Mammary epithelial cell (primary cell): ENCODE measurements at regions of chr1 and their contacts with region 1.

Region 1: DNA sequence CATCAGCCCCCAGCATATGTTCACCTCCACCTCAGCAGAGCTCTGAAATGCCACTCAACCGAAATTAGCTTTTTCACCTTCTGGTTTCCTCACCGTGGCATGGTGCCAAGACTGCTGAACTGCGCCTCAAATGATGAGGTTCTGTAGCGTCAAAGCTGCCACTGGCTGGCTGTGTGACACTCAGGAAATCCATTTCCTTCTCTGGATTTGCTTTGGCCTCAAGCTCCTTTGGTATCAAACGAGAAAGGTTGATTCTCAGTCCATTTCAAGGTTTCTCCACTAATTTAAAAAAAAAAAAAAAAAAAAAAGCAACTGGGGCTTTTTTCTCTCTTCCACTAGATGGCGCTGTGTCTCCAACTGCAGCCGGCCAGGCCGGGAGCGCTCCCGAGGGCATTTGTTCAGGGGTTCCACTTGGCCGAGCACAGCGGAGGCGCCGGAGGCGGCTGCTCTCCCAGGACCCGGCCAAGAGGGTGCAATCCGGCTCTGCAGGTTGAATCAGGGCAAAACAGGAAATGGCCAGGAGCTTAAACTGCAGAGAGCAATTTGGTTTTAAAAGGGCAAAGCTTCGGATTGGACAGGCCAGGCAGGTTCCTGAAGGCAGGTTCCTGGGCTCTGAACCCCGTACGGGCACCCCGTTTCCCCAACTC is 26.5 kb upstream of the PLA2G2C start:
- DNase-seq: peak; percentile 80
- H3K4me3 ChIP-seq: no peak overlapping the region
- H3K27ac ChIP-seq: peak overlapping the region; percentile 97
- H3K4me1 ChIP-seq: peaks cover 41% of the 10 kb centered on the region
- H3K27me3 ChIP-seq: no peaks in the 10 kb centered on the region
- CTCF ChIP-seq: peak; percentile 58 to 84

Region 2: DNA sequence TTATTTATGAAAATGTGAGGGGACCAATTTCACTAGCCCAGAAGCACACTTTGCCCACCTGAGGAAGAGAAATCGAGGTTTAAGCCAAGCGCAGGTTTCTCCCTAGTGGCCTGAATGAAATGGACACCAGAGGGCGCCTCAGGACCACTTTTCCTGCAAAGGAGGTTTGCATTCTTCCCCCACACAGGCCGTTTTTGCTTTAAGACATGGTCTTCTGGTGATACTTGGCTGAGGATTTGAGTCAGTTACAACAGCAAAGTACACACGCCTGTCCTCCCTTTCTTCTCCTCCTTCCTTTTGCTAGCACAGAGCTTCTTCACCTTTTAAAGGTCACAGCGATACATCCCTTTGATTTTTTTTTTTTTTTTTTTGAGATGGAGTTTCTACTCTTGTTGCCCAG is 294.8 kb before region 1 on chr1:
- CTCF ChIA-PET with region 1: no interaction called
- dilution Hi-C with region 1: no loop called
- in situ Hi-C with region 1: no loop called
- intact Hi-C with region 1: loop called (anchors 5 kb)
- DNase-seq: peak; percentile 60
- H3K4me3 ChIP-seq: no peak overlapping the region
- H3K27ac ChIP-seq: no peak overlapping the region
- H3K4me1 ChIP-seq: no peaks in the 10 kb centered on the region
- H3K27me3 ChIP-seq: no peaks in the 10 kb centered on the region
- CTCF ChIP-seq: peak; percentile 90 to 95

Region 3: DNA sequence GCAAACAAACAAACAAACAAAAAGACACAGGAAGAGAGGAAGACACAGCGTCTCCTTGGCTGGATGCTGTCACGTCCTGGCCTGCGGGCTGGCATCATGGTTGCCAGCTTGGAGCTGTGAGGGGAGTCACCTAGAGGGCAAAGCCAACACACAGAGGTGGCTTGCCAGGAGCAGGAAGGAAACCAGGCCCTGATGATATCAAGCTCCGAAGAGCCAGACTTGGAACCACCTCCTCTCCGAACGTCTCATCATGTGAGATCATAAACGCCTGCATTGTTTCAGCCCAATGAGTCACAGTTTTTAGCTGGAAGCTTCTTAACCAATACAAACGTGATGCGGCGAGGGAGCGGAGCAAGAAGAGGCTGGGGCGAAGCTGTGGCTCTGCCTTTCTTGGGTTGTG is 102.1 kb before region 1 on chr1:
- CTCF ChIA-PET with region 1: no interaction called
- dilution Hi-C with region 1: no loop called
- in situ Hi-C with region 1: no loop called
- intact Hi-C with region 1: no loop called
- DNase-seq: peak; percentile 98
- H3K4me3 ChIP-seq: no peak overlapping the region
- H3K27ac ChIP-seq: peak overlapping the region; percentile 75
- H3K4me1 ChIP-seq: peaks cover 22% of the 10 kb centered on the region
- H3K27me3 ChIP-seq: no peaks in the 10 kb centered on the region
- CTCF ChIP-seq: no peak

Region 4: GRCh38 chr1:20165522-20165951 is 47.3 kb before region 1 on chr1:
- CTCF ChIA-PET with region 1: no interaction called
- dilution Hi-C with region 1: loop called (anchors 5 kb)
- in situ Hi-C with region 1: no loop called
- intact Hi-C with region 1: loop called (anchors 1 kb)
- DNase-seq: peak; percentile 52
- H3K4me3 ChIP-seq: no peak overlapping the region
- H3K27ac ChIP-seq: no peak overlapping the region
- H3K4me1 ChIP-seq: peaks cover 29% of the 10 kb centered on the region
- H3K27me3 ChIP-seq: no peaks in the 10 kb centered on the region
- CTCF ChIP-seq: peak; percentile 55 to 64

Region 5: GRCh38 chr1:20361806-20362640 is 149.2 kb after region 1 on chr1:
- CTCF ChIA-PET with region 1: interaction called, 34 read pairs
- dilution Hi-C with region 1: no loop called
- in situ Hi-C with region 1: no loop called
- intact Hi-C with region 1: loop called (anchors 2 kb)
- DNase-seq: peak; percentile 55
- H3K4me3 ChIP-seq: no peak overlapping the region
- H3K27ac ChIP-seq: no peak overlapping the region
- H3K4me1 ChIP-seq: peaks cover 41% of the 10 kb centered on the region
- H3K27me3 ChIP-seq: peaks cover 5% of the 10 kb centered on the region
- CTCF ChIP-seq: peak; percentile 95 to 98

Region 6: DNA sequence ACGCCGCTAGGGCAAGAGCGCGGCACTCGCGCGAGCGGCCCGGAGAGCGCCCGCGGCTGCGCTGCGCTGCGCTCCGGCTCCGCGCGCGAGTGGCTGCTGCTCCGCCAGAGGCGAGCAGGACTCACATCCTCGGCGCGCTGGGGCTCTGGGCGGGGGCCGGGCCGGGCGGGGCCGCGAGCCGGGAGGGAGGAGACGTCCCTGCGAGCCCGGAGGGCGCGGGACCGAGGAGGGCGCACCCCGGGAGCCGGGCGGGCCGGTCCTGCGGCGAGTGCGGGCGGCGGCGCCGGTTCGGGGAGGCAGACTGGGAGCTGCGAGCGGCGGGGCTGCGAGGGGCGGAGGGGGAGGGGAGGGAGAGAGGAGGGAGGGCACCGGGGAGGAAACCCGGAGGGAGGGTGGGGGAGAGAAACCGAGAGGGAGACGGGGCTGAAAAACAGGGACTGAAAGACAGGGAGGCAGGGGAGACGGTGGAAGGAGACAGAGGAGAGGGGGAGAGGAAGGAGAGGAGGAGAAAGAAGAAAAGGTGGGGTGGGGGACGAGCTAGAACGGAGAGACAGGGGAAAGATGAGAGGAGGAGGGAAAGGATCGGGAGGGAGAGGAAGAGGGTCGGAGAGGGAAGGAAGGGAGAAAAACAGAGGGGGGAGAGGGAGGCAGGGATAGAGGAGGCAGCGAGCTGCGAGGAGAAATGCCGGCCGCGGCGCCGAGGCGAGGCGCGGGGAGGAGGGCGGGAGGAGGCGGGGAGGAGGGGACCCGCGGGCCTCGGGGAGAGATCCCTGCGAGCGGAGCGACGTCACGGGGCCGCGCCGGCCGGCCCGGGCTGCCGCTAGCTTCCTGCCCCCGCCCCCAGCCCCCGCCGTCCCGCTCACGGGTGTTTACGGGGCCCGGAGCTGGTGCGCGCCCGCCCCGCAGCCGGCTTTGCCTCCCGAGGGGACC is 273.0 kb after region 1 on chr1 and contains the start of gene CAMK2N1:
- CTCF ChIA-PET with region 1: no interaction called
- dilution Hi-C with region 1: loop called (anchors 5 kb)
- in situ Hi-C with region 1: loop called (anchors 5 kb)
- intact Hi-C with region 1: no loop called
- DNase-seq: peak; percentile 79
- H3K4me3 ChIP-seq: peak within 1 kb of the TSS; percentile 73 to 98 (median 94)
- H3K27ac ChIP-seq: peak within 1 kb of the TSS; percentile 79
- H3K4me1 ChIP-seq: peaks cover 28% of the 10 kb centered on the region
- H3K27me3 ChIP-seq: no peaks in the 10 kb centered on the region
- CTCF ChIP-seq: no peak
- total RNA-seq, gene CAMK2N1: 22.0 to 105 TPM

Region 7: GRCh38 chr1:20640183-20640597 is 427.4 kb after region 1 on chr1:
- CTCF ChIA-PET with region 1: no interaction called
- dilution Hi-C with region 1: no loop called
- in situ Hi-C with region 1: no loop called
- intact Hi-C with region 1: loop called (anchors 2 kb)
- DNase-seq: peak; percentile 37
- H3K4me3 ChIP-seq: no peak overlapping the region
- H3K27ac ChIP-seq: no peak overlapping the region
- H3K4me1 ChIP-seq: no peaks in the 10 kb centered on the region
- H3K27me3 ChIP-seq: no peaks in the 10 kb centered on the region
- CTCF ChIP-seq: peak; percentile 77 to 78